CD8-positive, alpha-beta memory T cell (primary cell): ENCODE measurements at regions of chr6 and their contacts with region 1.

Region 1: GRCh38 chr6:112163295-112164257 is 76.2 kb downstream of the FAM229B start:
- DNase-seq: peak; percentile 46 to 78 (median 63)
- H3K4me3 ChIP-seq: no peak overlapping the region
- H3K4me3 Mint-ChIP-seq: peak overlapping the region in 6 of 7 donors; percentile 40 to 79 (median 66)
- H3K27ac ChIP-seq: no peak overlapping the region
- H3K27ac Mint-ChIP-seq: peak overlapping the region in 3 of 8 donors; percentile 10 to 27 (median 24)
- H3K4me1 ChIP-seq: peaks cover 6% of the 10 kb centered on the region
- H3K4me1 Mint-ChIP-seq: peaks cover 7 to 16% (median 11%) of the 10 kb centered on the region in 3 donors
- H3K27me3 ChIP-seq: peaks cover 13% of the 10 kb centered on the region
- H3K27me3 Mint-ChIP-seq: peaks cover 9 to 74% of the 10 kb centered on the region in 2 donors

Region 2: DNA sequence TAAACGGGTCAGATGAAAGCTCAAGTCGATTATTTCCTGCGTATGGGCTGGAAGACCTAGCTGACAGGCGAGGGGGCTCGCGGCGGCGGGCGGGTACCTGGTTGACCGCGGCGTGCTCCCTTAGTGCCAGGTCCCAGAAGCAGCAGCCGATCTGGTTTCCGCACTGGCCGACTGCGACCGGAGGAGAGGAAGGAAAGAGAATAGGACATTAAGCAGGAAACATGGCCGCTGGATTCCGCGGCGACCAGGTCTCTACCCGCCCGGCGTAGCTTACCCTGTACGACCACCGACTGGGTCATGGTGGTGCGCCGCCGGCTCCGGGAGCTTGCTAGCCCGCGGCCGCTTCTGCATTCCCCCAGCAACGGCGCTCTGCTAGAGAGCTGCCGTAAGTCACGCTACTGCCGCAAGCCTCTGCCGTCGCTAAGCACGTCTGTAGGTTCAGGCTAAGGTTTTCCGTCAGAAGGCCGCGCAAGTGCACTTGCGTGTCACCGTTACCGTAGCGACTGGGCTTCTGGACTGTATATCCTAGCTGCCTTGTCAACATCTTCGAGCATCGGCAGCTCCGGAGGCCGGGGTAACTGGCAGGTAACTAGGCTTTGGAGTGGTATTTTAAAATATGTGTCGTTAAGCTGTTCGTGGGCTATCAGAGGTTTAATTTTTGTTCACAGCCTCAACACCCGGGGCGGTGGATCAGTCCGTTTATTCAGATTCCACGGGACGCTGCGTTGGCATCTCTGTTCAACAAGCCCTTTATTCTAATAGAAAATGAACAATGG is 76.3 kb before region 1 on chr6 and contains the starts of genes FAM229B and TUBE1:
- CTCF ChIA-PET with region 1: interaction called, 14 read pairs
- POLR2A ChIA-PET with region 1: no interaction called
- DNase-seq: peak; percentile 82 to 96 (median 90)
- H3K4me3 ChIP-seq: peak within 1 kb of the TSS; percentile 89
- H3K4me3 Mint-ChIP-seq: no peak within 1 kb of the TSS
- H3K27ac ChIP-seq: peak within 1 kb of the TSS; percentile 92
- H3K27ac Mint-ChIP-seq: peak within 1 kb of the TSS in 1 of 8 donors; percentile 82
- H3K4me1 ChIP-seq: peaks cover 10% of the 10 kb centered on the region
- H3K4me1 Mint-ChIP-seq: peaks cover 8 to 13% (median 9%) of the 10 kb centered on the region in 3 donors
- H3K27me3 ChIP-seq: peaks cover 14% of the 10 kb centered on the region
- H3K27me3 Mint-ChIP-seq: peaks cover 4 to 34% of the 10 kb centered on the region in 2 donors
- total RNA-seq, gene FAM229B: 7.2 to 8.7 TPM
- total RNA-seq, gene TUBE1: 25.6 to 31.0 TPM

Region 3: DNA sequence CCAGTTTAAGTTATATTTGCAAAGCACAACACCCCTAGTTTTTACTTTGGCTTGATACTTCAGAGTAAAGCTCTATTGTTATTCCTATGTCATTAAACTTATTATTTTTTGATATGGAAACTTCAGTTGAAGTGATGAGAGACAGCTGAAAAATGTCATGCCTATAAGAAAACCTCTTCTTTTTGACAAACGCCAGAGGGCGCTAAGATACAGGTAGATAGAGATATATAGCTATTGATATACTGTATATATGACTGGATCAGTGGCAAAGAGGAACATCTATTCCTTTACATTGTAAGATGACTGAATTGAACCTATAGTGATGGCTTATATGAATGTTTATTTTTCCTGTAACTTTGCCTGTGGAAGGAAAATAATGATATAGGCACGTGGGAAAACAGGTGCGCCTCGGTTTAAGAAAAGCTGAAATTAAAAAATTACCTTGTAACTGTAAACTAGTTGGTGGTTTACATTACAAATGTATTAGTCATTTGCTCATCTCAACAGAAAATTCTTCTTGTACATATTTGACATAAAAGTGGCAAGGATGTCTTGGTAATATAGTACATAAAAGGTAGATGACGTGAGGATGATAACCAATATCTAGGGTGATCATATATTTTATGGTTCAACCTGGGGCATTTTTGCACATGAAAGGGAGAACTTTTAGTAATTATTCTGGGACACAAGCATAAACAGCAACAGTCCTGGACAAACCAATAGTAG is 16.7 kb after region 1 on chr6:
- CTCF ChIA-PET with region 1: interaction called, 11 read pairs
- POLR2A ChIA-PET with region 1: no interaction called
- DNase-seq: peak; percentile 33 to 65 (median 51)
- H3K4me3 ChIP-seq: no peak overlapping the region
- H3K4me3 Mint-ChIP-seq: no peak overlapping the region
- H3K27ac ChIP-seq: no peak overlapping the region
- H3K27ac Mint-ChIP-seq: no peak overlapping the region
- H3K4me1 ChIP-seq: no peaks in the 10 kb centered on the region
- H3K4me1 Mint-ChIP-seq: no peaks in the 10 kb centered on the region
- H3K27me3 ChIP-seq: peaks cover 4% of the 10 kb centered on the region
- H3K27me3 Mint-ChIP-seq: peaks cover 18 to 54% of the 10 kb centered on the region in 2 donors